ENCODE measurements at regions of chr10 and their contacts with region 1.

Region 1: DNA sequence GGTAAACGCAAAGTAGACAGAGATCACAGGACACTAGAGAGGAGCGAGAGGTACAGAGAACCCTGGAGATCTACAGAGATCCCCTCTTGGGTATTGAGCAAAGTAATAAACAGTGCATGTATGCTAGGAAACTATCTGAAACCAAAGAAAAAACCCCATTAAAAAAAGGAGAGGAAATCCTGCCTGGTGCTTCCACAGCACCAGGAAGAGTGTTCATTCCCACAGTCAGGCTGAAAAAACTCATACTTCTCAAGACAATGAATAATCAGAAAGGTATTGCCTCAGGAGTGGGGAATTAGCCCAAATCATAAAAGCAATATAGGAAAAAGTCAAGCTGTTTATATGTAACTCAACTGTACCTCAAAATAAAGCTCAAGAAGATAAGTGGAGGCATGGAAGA is 59.1 kb downstream of the ANKRD26 start:
- DNase-seq: no peak
- ATAC-seq: no peak
- H3K4me3 ChIP-seq: no peak overlapping the region
- H3K27ac ChIP-seq: no peak overlapping the region
- H3K4me1 ChIP-seq: no peaks in the 10 kb centered on the region
- H3K27me3 ChIP-seq: no peaks in the 10 kb centered on the region
- CTCF ChIP-seq: no peak

Region 2: DNA sequence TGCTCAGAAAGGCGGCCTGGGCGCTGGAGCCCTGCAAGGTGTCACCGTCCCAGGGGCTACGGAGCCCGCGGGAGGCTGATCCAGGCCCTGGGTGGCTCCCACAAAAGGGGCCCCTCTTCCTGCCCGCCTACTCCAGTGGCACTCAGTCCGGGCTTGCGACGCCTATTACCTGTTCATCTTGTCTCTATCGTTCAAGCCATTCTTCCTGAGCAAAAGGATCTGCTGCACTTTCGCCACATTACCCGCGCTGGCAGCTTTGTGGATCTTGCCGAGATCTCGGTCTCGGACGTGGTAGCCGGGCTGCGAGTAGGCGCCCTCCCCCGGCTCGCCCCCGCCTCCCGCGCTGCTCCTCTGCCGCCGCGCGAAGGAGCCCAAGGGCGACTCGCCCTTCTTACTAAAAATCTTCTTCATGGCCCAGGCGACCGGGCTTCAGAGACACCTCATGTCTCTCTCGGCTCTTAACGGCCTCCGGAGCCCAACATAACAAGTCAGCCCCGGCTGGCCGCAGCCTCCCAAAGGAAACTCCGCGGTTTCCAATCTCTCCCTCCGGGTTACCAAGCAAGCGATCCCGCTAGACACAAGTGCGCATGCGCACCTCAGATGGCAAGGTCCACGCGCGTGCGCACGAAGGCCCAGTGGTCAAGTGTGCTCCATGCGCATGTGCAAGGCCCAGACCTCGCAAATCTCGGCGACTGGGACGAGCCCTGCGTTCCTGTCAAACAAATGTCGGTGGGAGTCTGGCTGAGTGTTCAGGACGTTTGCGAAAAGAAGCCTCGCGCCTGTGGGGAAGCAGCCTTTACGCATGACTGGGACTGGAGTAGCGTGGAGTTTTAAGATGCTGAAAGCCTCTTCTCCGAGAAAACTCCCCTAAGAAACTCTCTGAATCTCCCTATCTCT is 59.0 kb after region 1 on chr10 and contains the start of gene ANKRD26:
- intact Hi-C with region 1: no loop called
- DNase-seq: peak; percentile 97 to 99
- ATAC-seq: peak; percentile 94 to 98 (median 96)
- H3K4me3 ChIP-seq: peak within 1 kb of the TSS; percentile 72 to 87 (median 76)
- H3K27ac ChIP-seq: peak within 1 kb of the TSS; percentile 85 to 96 (median 92)
- H3K4me1 ChIP-seq: peaks cover 3 to 22% (median 15%) of the 10 kb centered on the region in 9 donors
- H3K27me3 ChIP-seq: no peaks in the 10 kb centered on the region
- CTCF ChIP-seq: peak in 3 of 9 donors; percentile 18 to 26 (median 24)
- total RNA-seq, gene ANKRD26: 8.2 to 12.2 (median 10.8) TPM

Region 3: GRCh38 chr10:27111277-27111676 is 70.1 kb after region 1 on chr10:
- intact Hi-C with region 1: loop called in 1 of 10 experiments (anchors 10 kb)
- DNase-seq: no peak
- ATAC-seq: no peak
- H3K4me3 ChIP-seq: no peak overlapping the region
- H3K27ac ChIP-seq: no peak overlapping the region
- H3K4me1 ChIP-seq: no peaks in the 10 kb centered on the region
- H3K27me3 ChIP-seq: no peaks in the 10 kb centered on the region
- CTCF ChIP-seq: no peak

Region 4: GRCh38 chr10:27134371-27134770 is 93.2 kb after region 1 on chr10:
- intact Hi-C with region 1: loop called in 1 of 10 experiments (anchors 10 kb)
- DNase-seq: no peak
- ATAC-seq: no peak
- H3K4me3 ChIP-seq: no peak overlapping the region
- H3K27ac ChIP-seq: no peak overlapping the region
- H3K4me1 ChIP-seq: peaks cover 0 to 6% (median 0%) of the 10 kb centered on the region in 9 donors
- H3K27me3 ChIP-seq: no peaks in the 10 kb centered on the region
- CTCF ChIP-seq: no peak